ENCODE measurements at regions of chr6 and their contacts with region 1.

Region 1: DNA sequence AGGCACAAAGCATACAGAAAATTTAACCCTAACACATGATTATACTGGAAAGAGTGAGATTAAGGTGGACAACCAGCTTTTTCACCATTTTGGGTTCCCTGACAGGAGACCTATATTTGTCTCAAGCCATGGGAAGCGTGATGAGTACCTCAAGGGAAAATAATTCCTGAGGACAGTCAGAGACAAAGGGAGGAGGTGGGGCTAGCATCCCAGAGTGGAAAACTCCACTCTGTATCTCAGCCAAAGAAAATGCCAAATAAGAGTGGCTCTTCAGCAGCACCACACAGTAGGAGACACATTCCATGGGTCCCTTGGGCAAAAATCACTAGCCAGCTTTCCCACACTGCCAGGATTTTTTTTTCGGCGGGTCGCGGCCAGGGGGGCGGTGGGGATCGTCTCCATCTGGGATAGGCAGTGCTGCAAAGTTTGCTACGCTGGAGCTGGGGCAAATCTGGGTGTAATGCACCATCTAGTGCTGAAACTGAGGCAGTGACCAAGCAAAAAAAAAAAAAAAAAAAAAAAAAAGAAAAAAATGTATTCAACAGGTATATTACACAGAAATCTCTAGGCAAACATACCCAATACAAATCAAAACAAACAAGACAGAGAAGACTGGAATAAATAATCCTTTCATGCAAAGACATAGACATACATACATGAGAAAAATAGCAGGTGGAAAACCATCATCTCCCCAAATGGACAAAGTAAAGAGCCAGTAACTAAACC is 77.3 kb upstream of the SLC35F1 start:
- ATAC-seq: peak; percentile 45 to 94 (median 71)
- H3K4me3 ChIP-seq: peak overlapping the region in 4 of 5 donors; percentile 19 to 46 (median 34)
- H3K27ac ChIP-seq: no peak overlapping the region
- H3K4me1 ChIP-seq: peaks cover 0 to 2% of the 10 kb centered on the region in 2 donors

Region 2: GRCh38 chr6:117602151-117602898 is 227.4 kb before region 1 on chr6 and contains the start of gene GOPC:
- in situ Hi-C with region 1: loop called in 1 of 9 experiments (anchors 25 kb)
- ATAC-seq: peak; percentile 95 to 98 (median 97)
- H3K4me3 ChIP-seq: peak within 1 kb of the TSS; percentile 79 to 94 (median 83)
- H3K27ac ChIP-seq: peak within 1 kb of the TSS; percentile 94 to 95
- H3K4me1 ChIP-seq: peaks cover 5 to 19% of the 10 kb centered on the region in 2 donors
- total RNA-seq, gene GOPC: 34.9 to 48.5 (median 40.3) TPM

Region 3: DNA sequence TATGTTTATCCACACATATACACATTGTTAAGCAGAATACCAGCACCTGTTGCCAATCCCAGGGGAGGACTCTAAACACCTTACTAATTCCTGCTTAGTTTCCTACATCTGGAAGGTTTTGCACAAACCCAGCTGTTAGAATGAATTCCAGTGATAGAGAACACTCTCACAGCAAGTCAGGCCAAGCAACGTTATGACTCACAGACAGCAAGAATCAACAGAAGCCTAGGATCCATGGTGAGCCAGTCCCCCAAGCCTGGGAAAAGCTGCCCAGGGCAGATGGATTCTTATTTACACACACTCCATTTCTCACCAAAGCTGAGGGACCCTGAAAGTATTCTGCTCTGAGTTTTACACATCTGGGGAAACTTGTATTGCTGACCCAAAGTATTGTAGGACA is 369.0 kb after region 1 on chr6:
- in situ Hi-C with region 1: no loop called
- ATAC-seq: peak in 6 of 8 experiments; percentile 24 to 61 (median 44)
- H3K4me3 ChIP-seq: no peak overlapping the region
- H3K27ac ChIP-seq: no peak overlapping the region
- H3K4me1 ChIP-seq: peaks cover 27 to 42% of the 10 kb centered on the region in 2 donors

Region 4: GRCh38 chr6:118263921-118264486 is 434.2 kb after region 1 on chr6:
- in situ Hi-C with region 1: loop called in 1 of 9 experiments (anchors 25 kb)
- ATAC-seq: peak in 6 of 8 experiments; percentile 27 to 97 (median 87)
- H3K4me3 ChIP-seq: no peak overlapping the region
- H3K27ac ChIP-seq: no peak overlapping the region
- H3K4me1 ChIP-seq: no peaks in the 10 kb centered on the region

Measured in motor neuron (in vitro differentiated cells).